ENCODE measurements at regions of chr1 and their contacts with region 1.

Region 1: GRCh38 chr1:55089683-55090082 is 50.3 kb downstream of the PCSK9 start:
- DNase-seq: no peak
- ATAC-seq: no peak
- H3K4me3 ChIP-seq: no peak overlapping the region
- H3K27ac ChIP-seq: no peak overlapping the region
- H3K4me1 ChIP-seq: peaks cover 0 to 5% (median 0%) of the 10 kb centered on the region in 12 donors
- H3K27me3 ChIP-seq: no peaks in the 10 kb centered on the region
- CTCF ChIP-seq: no peak
- POLR2A ChIP-seq: no peak

Region 2: GRCh38 chr1:55124470-55124869 is 34.8 kb after region 1 on chr1:
- intact Hi-C with region 1: loop called in 1 of 10 experiments (anchors 5 kb)
- DNase-seq: no peak
- ATAC-seq: no peak
- H3K4me3 ChIP-seq: no peak overlapping the region
- H3K27ac ChIP-seq: no peak overlapping the region
- H3K4me1 ChIP-seq: peaks cover 0 to 10% (median 0%) of the 10 kb centered on the region in 12 donors
- H3K27me3 ChIP-seq: no peaks in the 10 kb centered on the region
- CTCF ChIP-seq: no peak
- POLR2A ChIP-seq: no peak

Region 3: DNA sequence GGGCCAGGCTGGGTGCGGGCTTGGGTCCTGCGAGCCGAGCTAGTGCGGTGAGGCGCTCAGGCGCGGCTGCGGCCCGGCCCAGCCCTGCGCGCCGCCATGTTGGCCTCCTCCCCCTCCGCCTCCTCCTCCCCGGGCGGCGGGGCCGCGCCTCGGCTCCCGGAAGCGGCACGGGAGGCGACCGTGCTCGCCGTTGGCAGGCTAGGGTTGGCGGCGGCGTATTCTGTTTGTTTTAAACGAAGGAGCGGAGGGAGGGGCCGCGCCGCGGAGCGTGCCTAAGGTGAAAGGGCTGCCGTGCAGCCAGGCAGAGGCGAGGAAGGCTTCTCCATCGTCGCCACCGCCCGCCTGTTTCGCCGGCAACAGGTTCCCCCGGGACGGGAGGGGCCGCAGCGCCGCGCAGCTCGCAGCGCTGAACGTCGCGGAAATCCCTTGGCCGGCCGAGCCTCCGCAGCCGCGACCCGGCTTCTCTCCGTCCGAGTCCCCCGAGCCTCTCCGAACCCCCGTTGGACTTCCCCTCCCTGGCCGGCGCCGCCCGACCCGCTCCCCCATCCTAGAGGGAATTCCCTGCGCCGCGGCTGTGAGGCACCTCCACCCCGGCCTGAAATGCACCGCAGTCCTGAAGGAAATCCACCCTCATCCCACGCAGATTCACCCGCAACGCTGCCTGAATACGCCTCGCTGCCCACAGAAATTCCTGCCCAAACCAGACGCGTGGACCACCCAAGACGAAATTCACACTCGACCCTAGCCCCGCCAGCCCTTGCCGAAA is 125.8 kb after region 1 on chr1 and contains the start of gene USP24:
- intact Hi-C with region 1: no loop called
- DNase-seq: peak; percentile 81 to 92 (median 83)
- ATAC-seq: peak; percentile 56 to 95 (median 92)
- H3K4me3 ChIP-seq: peak within 1 kb of the TSS; percentile 80 to 96 (median 90)
- H3K27ac ChIP-seq: peak within 1 kb of the TSS; percentile 95 to 99 (median 99)
- H3K4me1 ChIP-seq: peaks cover 13 to 65% (median 51%) of the 10 kb centered on the region in 12 donors
- H3K27me3 ChIP-seq: no peaks in the 10 kb centered on the region
- CTCF ChIP-seq: no peak
- POLR2A ChIP-seq: peak in 1 of 2 donors; percentile 85
- total RNA-seq, gene USP24: 26.3 to 53.7 (median 36.8) TPM

Measured in heart left ventricle (tissue), 16 donors.